ENCODE measurements at regions of chr12 and their contacts with region 1.

Region 1: DNA sequence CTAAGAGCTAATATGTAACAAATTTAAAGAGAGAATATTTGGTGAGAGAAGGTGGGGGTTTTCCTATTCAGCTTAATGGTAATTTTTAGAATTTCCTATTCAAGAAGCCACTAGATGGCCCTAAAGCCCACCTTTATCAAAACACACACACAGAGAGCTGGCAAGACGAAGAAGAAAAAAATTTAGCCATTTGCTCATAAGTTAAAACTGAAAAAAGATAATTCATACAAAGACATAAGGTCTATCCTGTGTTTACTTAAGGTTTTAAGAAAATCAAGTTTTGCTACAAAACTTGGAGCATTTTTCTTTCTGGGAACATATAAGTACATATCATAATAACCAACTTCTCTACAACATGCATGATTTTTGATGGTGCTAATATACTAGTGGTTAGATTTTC is 46.8 kb upstream of the PCED1B start:
- DNase-seq: peak in 7 of 9 donors; percentile 48 to 74 (median 60)
- ATAC-seq: peak; percentile 83
- H3K4me3 ChIP-seq: no peak overlapping the region
- H3K4me3 Mint-ChIP-seq: peak overlapping the region in 6 of 10 donors; percentile 1 to 44 (median 28)
- H3K27ac ChIP-seq: no peak overlapping the region
- H3K27ac Mint-ChIP-seq: peak overlapping the region in 5 of 9 donors; percentile 1 to 36 (median 11)
- H3K4me1 ChIP-seq: peaks cover 0 to 6% of the 10 kb centered on the region in 2 donors
- H3K4me1 Mint-ChIP-seq: peaks cover 9 to 40% (median 24%) of the 10 kb centered on the region in 7 donors
- H3K27me3 ChIP-seq: no peaks in the 10 kb centered on the region
- H3K27me3 Mint-ChIP-seq: peaks cover 0 to 9% (median 0%) of the 10 kb centered on the region in 5 donors

Region 2: DNA sequence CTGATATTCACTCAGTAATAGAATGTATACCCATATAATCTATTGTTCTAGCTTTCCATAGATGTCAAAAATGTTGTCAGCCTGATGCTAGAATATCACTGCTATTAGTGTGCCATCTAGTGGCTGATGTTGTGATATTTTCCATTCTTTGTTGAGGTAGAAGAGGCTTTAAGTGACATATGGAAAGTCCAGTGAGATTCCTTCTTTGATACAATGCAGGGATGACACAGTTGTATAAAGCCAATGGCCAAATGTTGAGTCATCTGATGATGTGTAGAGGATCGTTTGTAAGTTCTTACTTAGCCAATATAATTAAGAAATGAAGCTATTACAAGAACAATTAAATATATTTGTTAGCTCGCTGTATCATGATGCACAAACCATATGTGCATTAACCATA is 11.3 kb before region 1 on chr12:
- CTCF ChIA-PET with region 1: interaction called, 21 read pairs
- POLR2A ChIA-PET with region 1: no interaction called
- intact Hi-C with region 1: no loop called
- DNase-seq: peak in 7 of 9 donors; percentile 7 to 55 (median 51)
- ATAC-seq: peak; percentile 68
- H3K4me3 ChIP-seq: no peak overlapping the region
- H3K4me3 Mint-ChIP-seq: no peak overlapping the region
- H3K27ac ChIP-seq: no peak overlapping the region
- H3K27ac Mint-ChIP-seq: no peak overlapping the region
- H3K4me1 ChIP-seq: no peaks in the 10 kb centered on the region
- H3K4me1 Mint-ChIP-seq: no peaks in the 10 kb centered on the region
- H3K27me3 ChIP-seq: peaks cover 0 to 3% of the 10 kb centered on the region in 2 donors
- H3K27me3 Mint-ChIP-seq: peaks cover 4 to 31% (median 10%) of the 10 kb centered on the region in 5 donors

Region 3: GRCh38 chr12:47190271-47190750 is 157.7 kb after region 1 on chr12:
- CTCF ChIA-PET with region 1: interaction called, 12 read pairs
- POLR2A ChIA-PET with region 1: interaction called, 3 read pairs
- intact Hi-C with region 1: loop called (anchors 1 to 5 kb)
- DNase-seq: no peak
- ATAC-seq: no peak
- H3K4me3 ChIP-seq: no peak overlapping the region
- H3K4me3 Mint-ChIP-seq: peak overlapping the region; percentile 42 to 87 (median 76)
- H3K27ac ChIP-seq: peak overlapping the region; percentile 61
- H3K27ac Mint-ChIP-seq: peak overlapping the region; percentile 81 to 98 (median 93)
- H3K4me1 ChIP-seq: peaks cover 52 to 77% of the 10 kb centered on the region in 2 donors
- H3K4me1 Mint-ChIP-seq: peaks cover 69 to 98% (median 93%) of the 10 kb centered on the region in 7 donors
- H3K27me3 ChIP-seq: no peaks in the 10 kb centered on the region
- H3K27me3 Mint-ChIP-seq: no peaks in the 10 kb centered on the region

Region 4: GRCh38 chr12:47397664-47398281 is 365.1 kb after region 1 on chr12:
- CTCF ChIA-PET with region 1: interaction called, 74 read pairs
- POLR2A ChIA-PET with region 1: interaction called, 10 read pairs
- intact Hi-C with region 1: loop called (anchors 1 kb)
- DNase-seq: peak in 8 of 9 donors; percentile 33 to 71 (median 54)
- ATAC-seq: peak; percentile 86
- H3K4me3 ChIP-seq: peak overlapping the region; percentile 20
- H3K4me3 Mint-ChIP-seq: peak overlapping the region; percentile 29 to 73 (median 64)
- H3K27ac ChIP-seq: no peak overlapping the region
- H3K27ac Mint-ChIP-seq: peak overlapping the region; percentile 61 to 98 (median 91)
- H3K4me1 ChIP-seq: peaks cover 41% of the 10 kb centered on the region in 2 donors
- H3K4me1 Mint-ChIP-seq: peaks cover 28 to 76% (median 52%) of the 10 kb centered on the region in 7 donors
- H3K27me3 ChIP-seq: no peaks in the 10 kb centered on the region
- H3K27me3 Mint-ChIP-seq: no peaks in the 10 kb centered on the region

Region 5: DNA sequence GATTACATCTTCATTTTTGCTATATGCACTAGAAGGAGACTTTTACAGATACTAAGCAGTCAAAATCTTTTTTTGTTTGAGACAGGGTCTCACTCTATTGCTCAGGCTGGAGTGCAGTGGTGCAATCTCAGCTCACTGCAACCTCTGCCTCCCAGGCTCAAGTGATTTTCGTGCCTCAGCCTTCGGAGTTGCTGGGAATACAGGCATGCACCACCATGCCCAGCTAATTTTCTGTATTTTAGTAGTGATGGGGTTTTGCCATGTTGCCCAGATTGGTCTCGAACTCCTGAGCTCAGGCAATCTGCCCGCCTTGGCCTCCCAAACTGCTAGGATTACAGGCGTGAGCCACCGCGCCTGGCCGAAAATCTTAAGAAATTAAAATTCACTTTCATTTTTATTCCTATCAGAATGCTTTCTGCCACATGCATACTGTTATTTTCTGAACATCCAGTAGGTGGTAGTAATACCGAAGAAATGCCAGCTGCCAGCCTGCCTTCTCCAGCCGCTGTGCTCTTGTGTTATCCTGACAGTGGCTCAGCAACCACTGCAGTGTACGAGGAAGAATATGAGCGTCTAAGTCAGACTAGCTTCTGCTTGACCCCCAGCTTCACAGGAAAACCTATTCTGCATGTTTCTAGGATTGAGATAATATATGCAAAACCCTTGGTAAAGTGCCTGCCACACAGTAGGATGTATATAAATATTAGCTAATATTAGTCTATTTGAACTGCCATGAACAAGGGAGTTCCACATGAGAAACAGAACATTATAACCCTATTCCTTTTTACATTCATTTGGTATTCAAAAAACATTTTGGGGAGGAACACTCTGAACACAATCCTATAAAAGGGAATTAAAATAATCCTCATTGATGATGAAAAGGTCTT is 619.0 kb after region 1 on chr12:
- CTCF ChIA-PET with region 1: interaction called, 13 read pairs
- POLR2A ChIA-PET with region 1: no interaction called
- intact Hi-C with region 1: loop called in 1 of 2 experiments (anchors 1 kb)
- DNase-seq: peak in 8 of 9 donors; percentile 39 to 69 (median 56)
- ATAC-seq: peak; percentile 97
- H3K4me3 ChIP-seq: peak overlapping the region; percentile 38
- H3K4me3 Mint-ChIP-seq: peak overlapping the region; percentile 21 to 75 (median 44)
- H3K27ac ChIP-seq: peak overlapping the region; percentile 9
- H3K27ac Mint-ChIP-seq: peak overlapping the region in 8 of 9 donors; percentile 11 to 94 (median 64)
- H3K4me1 ChIP-seq: peaks cover 5 to 6% of the 10 kb centered on the region in 2 donors
- H3K4me1 Mint-ChIP-seq: peaks cover 8 to 21% (median 16%) of the 10 kb centered on the region in 7 donors
- H3K27me3 ChIP-seq: no peaks in the 10 kb centered on the region
- H3K27me3 Mint-ChIP-seq: no peaks in the 10 kb centered on the region

Region 6: GRCh38 chr12:47758834-47759690 is 726.4 kb after region 1 on chr12 and contains the start of gene RAPGEF3:
- CTCF ChIA-PET with region 1: no interaction called
- POLR2A ChIA-PET with region 1: no interaction called
- intact Hi-C with region 1: loop called in 1 of 2 experiments (anchors 5 kb)
- DNase-seq: peak; percentile 47 to 81 (median 60)
- ATAC-seq: peak; percentile 91
- H3K4me3 ChIP-seq: peak within 1 kb of the TSS; percentile 66
- H3K4me3 Mint-ChIP-seq: peak within 1 kb of the TSS; percentile 61 to 85 (median 80)
- H3K27ac ChIP-seq: peak within 1 kb of the TSS; percentile 27
- H3K27ac Mint-ChIP-seq: peak within 1 kb of the TSS in 4 of 9 donors; percentile 29 to 55 (median 47)
- H3K4me1 ChIP-seq: peaks cover 9 to 11% of the 10 kb centered on the region in 2 donors
- H3K4me1 Mint-ChIP-seq: peaks cover 0 to 23% (median 9%) of the 10 kb centered on the region in 7 donors
- H3K27me3 ChIP-seq: no peaks in the 10 kb centered on the region
- H3K27me3 Mint-ChIP-seq: peaks cover 0 to 5% (median 0%) of the 10 kb centered on the region in 5 donors
- total RNA-seq, gene RAPGEF3: 0.08 to 1.9 (median 1.1) TPM in 4 of 5 experiments, not detected in the other

Measured in naive thymus-derived CD4-positive, alpha-beta T cell (primary cell).